Activated T-helper 1 cell treated with anti-CD3 and anti-CD28 coated beads, Interleukin-12 subunit alpha, Interleukin-12 subunit beta, Interleukin-2, Interleukin-4 antibody, amounts not matched to agents 30 ng/mL and 10 ng/mL and 1 ng/mL, durations not matched to agents 14 hours and 24 hours and 36 hours (primary cell): ENCODE measurements at regions of chr7 and their contacts with region 1.

Region 1: GRCh38 chr7:85916016-85916415 is 727.7 kb upstream of the GRM3 start:
- DNase-seq: no peak
- H3K4me3 Mint-ChIP-seq: no peak overlapping the region
- H3K27ac Mint-ChIP-seq: no peak overlapping the region
- H3K4me1 Mint-ChIP-seq: no peaks in the 10 kb centered on the region
- H3K27me3 Mint-ChIP-seq: no peaks in the 10 kb centered on the region

Region 2: GRCh38 chr7:85535974-85536729 is 379.9 kb before region 1 on chr7:
- intact Hi-C with region 1: no loop called
- DNase-seq: no peak
- H3K4me3 Mint-ChIP-seq: no peak overlapping the region
- H3K27ac Mint-ChIP-seq: no peak overlapping the region
- H3K4me1 Mint-ChIP-seq: no peaks in the 10 kb centered on the region
- H3K27me3 Mint-ChIP-seq: no peaks in the 10 kb centered on the region

Region 3: GRCh38 chr7:85940798-85941197 is 24.8 kb after region 1 on chr7:
- intact Hi-C with region 1: loop called (anchors 1 kb)
- DNase-seq: no peak
- H3K4me3 Mint-ChIP-seq: no peak overlapping the region
- H3K27ac Mint-ChIP-seq: no peak overlapping the region
- H3K4me1 Mint-ChIP-seq: no peaks in the 10 kb centered on the region
- H3K27me3 Mint-ChIP-seq: no peaks in the 10 kb centered on the region